T-cell (primary cell): ENCODE measurements at regions of chr19 and their contacts with region 1.

Region 1: DNA sequence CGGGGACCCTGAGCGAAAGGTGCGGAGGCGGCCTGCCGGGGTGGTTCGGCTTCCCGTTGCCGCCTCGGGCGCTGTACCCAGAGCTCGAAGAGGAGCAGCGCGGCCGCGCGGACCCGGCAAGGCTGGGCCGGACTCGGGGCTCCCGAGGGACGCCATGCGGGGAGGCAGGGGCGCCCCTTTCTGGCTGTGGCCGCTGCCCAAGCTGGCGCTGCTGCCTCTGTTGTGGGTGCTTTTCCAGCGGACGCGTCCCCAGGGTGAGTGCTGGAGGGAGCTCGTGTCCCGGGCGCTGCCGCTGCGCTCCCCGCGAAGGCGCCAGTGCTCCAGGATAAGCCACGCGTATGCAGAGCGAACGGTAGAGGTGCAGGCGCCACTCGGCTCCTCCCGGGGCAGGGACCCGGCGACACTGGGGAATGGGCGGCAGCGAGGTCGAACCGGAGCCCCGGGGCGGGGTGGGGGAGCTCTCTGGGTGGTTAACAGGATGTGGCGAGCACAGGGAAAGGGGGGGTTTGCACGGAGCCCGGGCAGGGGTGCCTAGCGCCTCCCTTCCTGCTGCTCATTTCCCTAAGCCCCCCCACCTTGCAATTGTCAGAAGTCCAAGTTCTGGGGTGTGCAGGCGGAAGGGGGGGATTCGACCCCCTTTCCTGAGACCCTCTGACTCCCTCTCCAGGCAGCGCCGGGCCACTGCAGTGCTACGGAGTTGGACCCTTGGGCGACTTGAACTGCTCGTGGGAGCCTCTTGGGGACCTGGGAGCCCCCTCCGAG is at the start of gene IL27RA:
- DNase-seq: peak; percentile 72 to 91 (median 83)
- ATAC-seq: peak; percentile 81 to 92 (median 90)
- H3K4me3 ChIP-seq: peak within 1 kb of the TSS; percentile 71 to 93
- H3K4me3 Mint-ChIP-seq: peak within 1 kb of the TSS; percentile 91 to 93 (median 92)
- H3K27ac ChIP-seq: peak within 1 kb of the TSS; percentile 98
- H3K27ac Mint-ChIP-seq: peak within 1 kb of the TSS; percentile 94 to 96
- H3K4me1 ChIP-seq: peaks cover 8 to 48% of the 10 kb centered on the region in 2 experiments
- H3K4me1 Mint-ChIP-seq: peaks cover 27 to 55% (median 39%) of the 10 kb centered on the region in 3 donors
- H3K27me3 ChIP-seq: no peaks in the 10 kb centered on the region
- H3K27me3 Mint-ChIP-seq: no peaks in the 10 kb centered on the region
- total RNA-seq, gene IL27RA: 44.2 to 82.4 (median 66.5) TPM

Region 2: DNA sequence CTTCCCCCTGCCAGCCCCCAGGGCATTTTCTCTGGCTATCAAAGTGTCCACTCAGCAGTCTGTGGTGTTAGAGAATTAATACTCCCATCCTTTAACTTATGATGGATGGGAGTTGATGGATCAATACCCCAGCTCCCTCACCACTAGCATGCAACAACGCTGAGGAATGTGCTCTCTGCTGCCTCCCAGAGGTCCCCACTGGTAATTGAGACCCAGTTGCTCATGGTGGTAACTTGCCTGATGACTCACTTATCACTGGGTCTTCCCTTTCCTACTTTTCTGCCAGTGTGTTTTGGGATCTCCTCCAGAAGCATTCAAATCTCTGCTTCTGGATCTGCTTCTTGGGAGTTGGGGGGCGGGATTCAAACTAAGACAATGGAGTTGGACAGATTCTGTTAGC is 505.3 kb before region 1 on chr19:
- CTCF ChIA-PET with region 1: no interaction called
- POLR2A ChIA-PET with region 1: no interaction called
- DNase-seq: peak in 2 of 35 experiments; percentile 7 to 9
- ATAC-seq: no peak
- H3K4me3 ChIP-seq: no peak overlapping the region
- H3K4me3 Mint-ChIP-seq: no peak overlapping the region
- H3K27ac ChIP-seq: no peak overlapping the region
- H3K27ac Mint-ChIP-seq: no peak overlapping the region
- H3K4me1 ChIP-seq: no peaks in the 10 kb centered on the region
- H3K4me1 Mint-ChIP-seq: no peaks in the 10 kb centered on the region
- H3K27me3 ChIP-seq: peaks cover 2 to 31% of the 10 kb centered on the region in 2 experiments
- H3K27me3 Mint-ChIP-seq: peaks cover 58 to 61% of the 10 kb centered on the region in 2 donors

Region 3: GRCh38 chr19:13942023-13942684 is 89.7 kb before region 1 on chr19:
- CTCF ChIA-PET with region 1: no interaction called
- POLR2A ChIA-PET with region 1: interaction called in 1 of 2 experiments, 11 read pairs
- DNase-seq: no peak
- ATAC-seq: no peak
- H3K4me3 ChIP-seq: no peak overlapping the region
- H3K4me3 Mint-ChIP-seq: no peak overlapping the region
- H3K27ac ChIP-seq: no peak overlapping the region
- H3K27ac Mint-ChIP-seq: no peak overlapping the region
- H3K4me1 ChIP-seq: peaks cover 0 to 4% of the 10 kb centered on the region in 2 experiments
- H3K4me1 Mint-ChIP-seq: no peaks in the 10 kb centered on the region
- H3K27me3 ChIP-seq: peaks cover 0 to 17% of the 10 kb centered on the region in 2 experiments
- H3K27me3 Mint-ChIP-seq: peaks cover 4% of the 10 kb centered on the region in 2 donors

Region 4: GRCh38 chr19:14006243-14006765 is 25.6 kb before region 1 on chr19 and contains the start of gene RFX1:
- CTCF ChIA-PET with region 1: interaction called in 1 of 2 experiments, 3 read pairs
- POLR2A ChIA-PET with region 1: interaction called, 4 to 14 read pairs
- DNase-seq: peak; percentile 99 to 100 (median 100)
- ATAC-seq: peak; percentile 77 to 82 (median 80)
- H3K4me3 ChIP-seq: peak within 1 kb of the TSS; percentile 86 to 88
- H3K4me3 Mint-ChIP-seq: peak within 1 kb of the TSS; percentile 82 to 92 (median 91)
- H3K27ac ChIP-seq: peak within 1 kb of the TSS; percentile 100
- H3K27ac Mint-ChIP-seq: peak within 1 kb of the TSS; percentile 97 to 98
- H3K4me1 ChIP-seq: peaks cover 16 to 50% of the 10 kb centered on the region in 2 experiments
- H3K4me1 Mint-ChIP-seq: peaks cover 38 to 54% (median 47%) of the 10 kb centered on the region in 3 donors
- H3K27me3 ChIP-seq: no peaks in the 10 kb centered on the region
- H3K27me3 Mint-ChIP-seq: no peaks in the 10 kb centered on the region
- total RNA-seq, gene RFX1: 18.4 to 27.1 (median 23.1) TPM